ENCODE measurements at regions of chr7 and their contacts with region 1.

Region 1: DNA sequence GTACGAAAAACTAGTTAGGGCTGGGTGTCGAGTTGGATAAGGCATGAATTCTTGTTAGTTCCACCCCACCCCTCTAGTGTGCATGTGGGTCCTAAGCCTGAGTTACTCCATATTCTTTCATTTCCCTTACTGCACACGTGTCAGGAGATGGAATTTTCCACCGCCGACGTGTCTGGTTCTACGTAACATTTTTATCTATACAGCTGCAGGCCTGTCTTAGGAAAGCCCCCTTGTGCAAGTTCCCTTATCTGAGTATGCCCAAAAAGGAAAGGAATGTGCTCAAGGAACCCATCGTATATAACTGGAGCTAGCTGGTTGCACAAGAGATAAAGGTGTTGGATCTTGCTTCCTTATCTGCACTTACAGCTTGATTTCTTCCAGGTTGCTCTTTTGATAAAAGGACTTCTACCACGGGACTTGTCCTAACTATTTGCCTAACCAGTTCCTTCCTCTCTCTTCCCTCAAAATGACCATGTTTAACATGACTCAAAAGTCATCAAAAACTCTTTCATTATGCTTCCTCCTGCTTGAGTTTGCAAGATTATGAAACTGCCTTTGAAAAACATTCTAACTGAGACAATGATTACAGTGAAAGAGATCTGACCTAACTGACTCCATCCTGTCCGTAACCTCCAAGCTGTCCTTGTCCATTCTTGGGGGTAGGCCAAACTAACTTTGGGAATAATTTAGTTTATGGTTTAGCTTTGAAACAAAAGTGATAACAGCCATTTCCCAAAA is 181.4 kb downstream of the AKR1D1 start:
- DNase-seq: peak; percentile 80 to 93 (median 87)
- ATAC-seq: peak; percentile 87
- H3K4me3 ChIP-seq: no peak overlapping the region
- H3K27ac ChIP-seq: peak overlapping the region; percentile 87
- H3K4me1 ChIP-seq: peaks cover 0 to 26% of the 10 kb centered on the region in 2 experiments; a peak in 4 of 5 replicates
- H3K27me3 ChIP-seq: no peaks in the 10 kb centered on the region
- CTCF ChIP-seq: no peak
- EP300 ChIP-seq: peak; percentile 100
- POLR2A ChIP-seq: no peak
- RAD21 ChIP-seq: peak; percentile 40 to 67

Region 2: GRCh38 chr7:138002096-138002827 is 255.4 kb before region 1 on chr7:
- CTCF ChIA-PET with region 1: no interaction called
- POLR2A ChIA-PET with region 1: no interaction called
- in situ Hi-C with region 1: no loop called
- intact Hi-C with region 1: loop called (anchors 10 kb)
- DNase-seq: peak; percentile 99 to 100 (median 99)
- ATAC-seq: peak; percentile 93
- H3K4me3 ChIP-seq: peak overlapping the region; percentile 82
- H3K27ac ChIP-seq: peak overlapping the region; percentile 77
- H3K4me1 ChIP-seq: peaks cover 13 to 32% of the 10 kb centered on the region in 2 experiments
- H3K27me3 ChIP-seq: no peaks in the 10 kb centered on the region
- CTCF ChIP-seq: peak; percentile 90 to 99 (median 99)
- EP300 ChIP-seq: 0 out of 2 replicates have a peak, but pooled peaks have one; percentile 25
- POLR2A ChIP-seq: no peak
- RAD21 ChIP-seq: peak; percentile 53 to 64

Region 3: GRCh38 chr7:138161600-138162081 is 96.0 kb before region 1 on chr7:
- CTCF ChIA-PET with region 1: no interaction called
- POLR2A ChIA-PET with region 1: no interaction called
- in situ Hi-C with region 1: no loop called
- intact Hi-C with region 1: loop called (anchors 5 kb)
- DNase-seq: peak; percentile 94 to 98 (median 96)
- ATAC-seq: peak; percentile 100
- H3K4me3 ChIP-seq: no peak overlapping the region
- H3K27ac ChIP-seq: no peak overlapping the region
- H3K4me1 ChIP-seq: no peaks in the 10 kb centered on the region
- H3K27me3 ChIP-seq: no peaks in the 10 kb centered on the region
- CTCF ChIP-seq: peak; percentile 83 to 96 (median 91)
- EP300 ChIP-seq: 0 out of 2 replicates have a peak, but pooled peaks have one; percentile 7
- POLR2A ChIP-seq: no peak
- RAD21 ChIP-seq: peak; percentile 96 to 97

Region 4: DNA sequence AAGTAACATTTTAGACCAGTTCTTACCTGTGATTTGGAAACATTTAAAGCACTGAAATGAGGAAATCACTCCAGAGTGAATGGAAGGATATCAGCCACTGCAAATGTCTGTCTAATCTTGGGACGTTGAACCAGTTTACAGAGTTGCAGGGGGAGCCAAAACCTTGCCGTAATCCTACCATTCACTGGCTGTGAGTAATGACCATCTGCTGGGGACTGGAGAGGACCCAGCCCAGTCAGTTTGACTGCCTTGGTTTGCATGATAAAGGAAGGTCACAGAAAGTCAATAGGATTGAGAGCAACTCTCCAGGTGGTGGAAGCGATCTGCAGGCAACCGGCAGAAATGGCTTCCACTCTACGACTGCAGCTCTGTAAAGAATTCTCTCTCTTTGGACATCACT is 14.2 kb before region 1 on chr7:
- CTCF ChIA-PET with region 1: no interaction called
- POLR2A ChIA-PET with region 1: interaction called, 5 read pairs
- in situ Hi-C with region 1: no loop called
- intact Hi-C with region 1: loop called (anchors 1 kb)
- DNase-seq: peak; percentile 50 to 91 (median 68)
- ATAC-seq: peak; percentile 99
- H3K4me3 ChIP-seq: no peak overlapping the region
- H3K27ac ChIP-seq: peak overlapping the region; percentile 27; the same call in 1 of the 3 replicates
- H3K4me1 ChIP-seq: peaks cover 0 to 6% of the 10 kb centered on the region in 2 experiments; a peak in 2 of 5 replicates
- H3K27me3 ChIP-seq: no peaks in the 10 kb centered on the region
- CTCF ChIP-seq: peak; percentile 13 to 50 (median 33); a peak in 3 of 6 replicates
- EP300 ChIP-seq: peak; percentile 92
- POLR2A ChIP-seq: no peak
- RAD21 ChIP-seq: peak; percentile 47 to 67

Region 5: GRCh38 chr7:138352570-138353461 is 95.2 kb after region 1 on chr7:
- CTCF ChIA-PET with region 1: no interaction called
- POLR2A ChIA-PET with region 1: no interaction called
- in situ Hi-C with region 1: no loop called
- intact Hi-C with region 1: loop called (anchors 1 kb)
- DNase-seq: peak; percentile 98 to 99 (median 98)
- ATAC-seq: peak; percentile 96
- H3K4me3 ChIP-seq: no peak overlapping the region
- H3K27ac ChIP-seq: peak overlapping the region; percentile 98
- H3K4me1 ChIP-seq: peaks cover 10 to 40% of the 10 kb centered on the region in 2 experiments
- H3K27me3 ChIP-seq: no peaks in the 10 kb centered on the region
- CTCF ChIP-seq: no peak
- EP300 ChIP-seq: peak; percentile 99
- POLR2A ChIP-seq: no peak
- RAD21 ChIP-seq: peak; percentile 14 to 55; a peak in 2 of 4 replicates

Region 6: DNA sequence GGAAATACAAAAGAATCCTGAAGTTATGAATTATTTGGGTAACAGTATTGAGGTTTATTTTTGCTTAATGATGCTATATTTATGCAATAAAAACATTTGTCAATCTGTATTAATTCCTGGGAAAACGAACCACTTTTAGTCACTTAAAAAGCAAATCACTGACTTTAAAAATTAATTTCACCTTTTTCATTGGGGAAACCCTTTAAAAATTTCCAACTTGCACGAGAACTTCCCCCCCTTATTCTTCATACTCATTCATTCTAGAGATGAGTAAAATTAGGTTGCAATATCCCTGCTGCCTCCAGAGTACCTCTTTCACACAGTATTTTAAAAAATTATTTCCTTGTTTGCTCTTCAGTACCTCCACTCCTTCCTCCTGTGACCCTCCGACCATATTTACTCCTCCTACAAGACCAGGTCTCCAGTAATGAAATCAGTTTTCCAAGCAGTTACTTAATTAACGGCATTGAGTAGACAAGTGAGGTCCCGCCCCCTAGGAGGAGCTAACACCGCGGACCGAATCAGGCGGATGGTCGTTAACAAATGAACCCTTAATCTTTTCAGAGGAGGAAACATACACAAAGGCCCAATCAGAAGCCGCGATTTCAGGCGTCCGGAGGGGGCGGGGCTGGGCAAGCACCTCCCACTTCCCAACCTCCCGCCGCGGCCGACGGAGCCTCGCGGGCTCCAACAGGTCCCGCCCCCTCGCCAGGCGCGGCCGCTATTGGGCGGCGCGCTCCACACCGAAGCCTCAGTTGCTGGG is 202.0 kb after region 1 on chr7:
- CTCF ChIA-PET with region 1: no interaction called
- POLR2A ChIA-PET with region 1: interaction called, 3 read pairs
- in situ Hi-C with region 1: no loop called
- intact Hi-C with region 1: loop called (anchors 5 kb)
- DNase-seq: peak; percentile 99
- ATAC-seq: peak; percentile 90
- H3K4me3 ChIP-seq: peak overlapping the region; percentile 46
- H3K27ac ChIP-seq: peak overlapping the region; percentile 76
- H3K4me1 ChIP-seq: peaks cover 0 to 20% of the 10 kb centered on the region in 2 experiments; a peak in 3 of 5 replicates
- H3K27me3 ChIP-seq: no peaks in the 10 kb centered on the region
- CTCF ChIP-seq: peak; percentile 10 to 35 (median 13); a peak in 2 of 6 replicates
- EP300 ChIP-seq: 0 out of 2 replicates have a peak, but pooled peaks have one; percentile 23
- POLR2A ChIP-seq: no peak; the same call in 1 of the 2 replicates
- RAD21 ChIP-seq: no peak